ENCODE measurements at regions of chr17 and their contacts with region 1.

Region 1: GRCh38 chr17:69607162-69607834 is 192.8 kb downstream of the MAP2K6 start:
- DNase-seq: peak; percentile 86
- ATAC-seq: peak; percentile 42
- H3K4me3 ChIP-seq: no peak overlapping the region
- H3K27ac ChIP-seq: no peak overlapping the region
- H3K4me1 ChIP-seq: peaks cover 30% of the 10 kb centered on the region
- H3K27me3 ChIP-seq: no peaks in the 10 kb centered on the region
- CTCF ChIP-seq: peak; percentile 99

Region 2: DNA sequence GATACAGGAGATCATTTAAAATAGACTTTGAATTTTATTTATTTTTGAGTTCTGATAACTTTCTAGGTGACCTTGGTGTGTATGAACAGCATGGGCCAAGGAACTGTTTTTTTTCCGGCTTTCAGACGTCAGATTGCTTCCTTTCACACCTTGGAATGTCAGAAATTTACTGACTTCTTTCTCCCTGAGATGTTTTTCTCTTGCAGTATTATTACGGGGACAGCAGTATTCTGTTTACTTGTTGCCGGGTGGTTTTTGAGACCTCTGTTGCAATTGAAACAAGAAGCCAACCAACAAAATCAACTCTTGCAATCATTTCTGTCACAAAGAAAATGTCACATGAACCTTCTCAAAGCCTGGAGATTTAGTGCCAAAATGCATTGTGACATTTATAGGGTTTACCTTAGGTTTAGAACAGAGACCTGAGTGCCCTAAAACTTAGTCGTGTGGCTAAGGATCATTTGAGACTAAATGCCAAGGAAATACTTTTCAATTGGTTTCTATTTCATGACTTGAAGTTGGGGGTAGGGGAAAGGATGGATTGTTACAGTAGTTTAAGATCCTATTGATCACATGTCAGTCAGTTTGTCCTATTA is 18.5 kb before region 1 on chr17:
- CTCF ChIA-PET with region 1: no interaction called
- POLR2A ChIA-PET with region 1: no interaction called
- intact Hi-C with region 1: no loop called
- DNase-seq: no peak
- ATAC-seq: no peak
- H3K4me3 ChIP-seq: no peak overlapping the region
- H3K27ac ChIP-seq: no peak overlapping the region
- H3K4me1 ChIP-seq: no peaks in the 10 kb centered on the region
- H3K27me3 ChIP-seq: no peaks in the 10 kb centered on the region
- CTCF ChIP-seq: no peak

Region 3: DNA sequence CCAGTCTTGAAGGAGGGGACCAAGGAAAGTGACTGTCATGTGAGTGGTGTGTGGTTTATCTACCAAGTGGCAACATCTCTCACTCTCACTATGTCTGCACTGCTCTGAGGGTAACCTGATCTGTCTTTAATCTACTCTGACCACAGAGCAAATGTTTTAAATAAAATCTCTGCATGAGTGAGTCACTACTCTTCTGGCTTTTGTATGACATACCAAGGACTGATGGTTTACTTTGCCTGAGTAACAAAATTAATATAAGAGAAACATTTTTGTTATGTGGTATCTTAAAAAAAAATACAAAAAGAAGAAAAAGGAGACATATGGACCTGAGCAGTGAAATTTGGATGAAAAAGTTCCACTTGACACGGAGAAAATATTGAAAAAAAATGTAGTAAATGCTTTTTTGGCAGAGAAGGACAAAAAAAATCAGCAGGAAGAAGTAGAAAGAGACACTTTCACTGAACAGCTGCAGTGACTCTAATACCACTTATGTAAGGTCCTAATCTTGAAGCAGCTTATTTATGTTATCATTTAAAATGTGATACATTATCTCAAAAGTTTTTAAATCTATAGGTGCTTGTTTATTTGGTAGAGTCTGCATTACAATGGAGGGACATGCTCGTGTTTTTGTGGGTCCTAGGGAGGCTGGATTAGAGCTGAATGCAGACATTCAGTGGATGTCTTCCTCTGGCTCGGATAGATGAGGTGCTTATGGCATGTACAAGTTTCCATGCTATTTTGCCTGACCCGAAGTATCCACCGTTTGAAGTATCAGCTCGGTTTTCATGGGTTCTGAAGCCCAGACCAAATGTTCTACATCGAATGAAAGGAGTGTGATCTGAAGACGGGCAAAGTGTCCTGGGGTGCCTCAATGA is 47.9 kb after region 1 on chr17:
- CTCF ChIA-PET with region 1: no interaction called
- POLR2A ChIA-PET with region 1: no interaction called
- intact Hi-C with region 1: loop called (anchors 1 kb)
- DNase-seq: peak; percentile 94
- ATAC-seq: peak; percentile 100
- H3K4me3 ChIP-seq: no peak overlapping the region
- H3K27ac ChIP-seq: peak overlapping the region; percentile 11; the same call in 1 of the 2 replicates
- H3K4me1 ChIP-seq: peaks cover 18% of the 10 kb centered on the region
- H3K27me3 ChIP-seq: no peaks in the 10 kb centered on the region
- CTCF ChIP-seq: no peak

Region 4: GRCh38 chr17:69779378-69780214 is 172.3 kb after region 1 on chr17:
- CTCF ChIA-PET with region 1: interaction called, 4 read pairs
- POLR2A ChIA-PET with region 1: no interaction called
- intact Hi-C with region 1: loop called (anchors 1 kb)
- DNase-seq: peak; percentile 91
- ATAC-seq: peak; percentile 79
- H3K4me3 ChIP-seq: no peak overlapping the region
- H3K27ac ChIP-seq: peak overlapping the region; percentile 82
- H3K4me1 ChIP-seq: peaks cover 37% of the 10 kb centered on the region
- H3K27me3 ChIP-seq: no peaks in the 10 kb centered on the region
- CTCF ChIP-seq: no peak

Region 5: GRCh38 chr17:69870091-69870530 is 262.8 kb after region 1 on chr17:
- CTCF ChIA-PET with region 1: interaction called, 3 read pairs
- POLR2A ChIA-PET with region 1: no interaction called
- intact Hi-C with region 1: loop called (anchors 5 kb)
- DNase-seq: peak; percentile 95
- ATAC-seq: peak; percentile 69
- H3K4me3 ChIP-seq: no peak overlapping the region
- H3K27ac ChIP-seq: peak overlapping the region; percentile 66
- H3K4me1 ChIP-seq: peaks cover 40% of the 10 kb centered on the region
- H3K27me3 ChIP-seq: no peaks in the 10 kb centered on the region
- CTCF ChIP-seq: no peak

Region 6: GRCh38 chr17:70144260-70144846 is 537.1 kb after region 1 on chr17:
- CTCF ChIA-PET with region 1: interaction called, 9 read pairs
- POLR2A ChIA-PET with region 1: no interaction called
- intact Hi-C with region 1: loop called (anchors 1 kb)
- DNase-seq: peak; percentile 56
- ATAC-seq: no peak; the same call in 1 of the 2 replicates
- H3K4me3 ChIP-seq: no peak overlapping the region
- H3K27ac ChIP-seq: no peak overlapping the region
- H3K4me1 ChIP-seq: peaks cover 7% of the 10 kb centered on the region
- H3K27me3 ChIP-seq: no peaks in the 10 kb centered on the region
- CTCF ChIP-seq: peak; percentile 91

Region 7: DNA sequence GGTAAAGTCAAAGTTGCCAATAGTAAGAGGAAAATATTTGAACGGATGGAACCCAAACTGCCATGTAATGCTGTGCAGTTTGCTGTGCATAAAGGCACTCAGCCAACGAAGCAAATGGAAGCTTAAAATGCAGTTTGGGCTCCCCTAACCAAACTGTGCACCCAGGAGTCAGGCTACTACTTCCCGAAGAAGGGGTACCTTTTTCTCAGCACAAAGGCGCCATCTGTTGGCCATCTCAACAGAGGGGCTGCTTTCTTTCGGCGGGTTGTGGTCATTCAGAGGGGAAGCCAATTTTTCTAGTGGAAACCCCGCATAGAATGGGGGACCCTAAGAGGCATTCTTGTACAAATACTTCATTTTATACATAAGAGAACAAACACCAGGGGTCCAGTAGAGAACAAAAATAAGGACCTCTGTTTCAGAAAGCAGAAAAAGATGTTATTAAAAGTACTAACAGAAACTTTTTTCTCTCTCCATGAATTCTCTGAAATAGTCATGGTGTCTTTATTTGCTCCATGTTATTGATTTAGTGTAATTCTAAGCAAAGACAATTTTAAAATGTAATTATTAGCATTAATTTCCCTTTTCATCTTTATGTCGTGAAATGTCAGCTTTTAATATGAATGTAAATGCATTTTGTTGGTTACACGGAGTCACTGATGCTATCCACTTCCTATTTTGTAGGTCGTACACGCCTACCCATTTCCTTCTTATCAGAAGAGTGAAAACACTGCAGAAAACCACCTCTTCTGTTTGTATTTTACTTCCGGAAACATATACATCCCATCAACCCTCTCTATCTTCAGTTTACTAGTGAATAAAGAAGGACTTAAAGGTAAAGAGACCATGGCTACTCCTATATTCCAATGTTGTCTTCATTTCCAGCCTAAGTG is 1015.3 kb after region 1 on chr17:
- CTCF ChIA-PET with region 1: no interaction called
- POLR2A ChIA-PET with region 1: no interaction called
- intact Hi-C with region 1: loop called (anchors 1 kb)
- DNase-seq: peak; percentile 80
- ATAC-seq: peak; percentile 90
- H3K4me3 ChIP-seq: peak overlapping the region; percentile 4; the same call in 1 of the 2 replicates
- H3K27ac ChIP-seq: no peak overlapping the region
- H3K4me1 ChIP-seq: peaks cover 3% of the 10 kb centered on the region; the same call in 1 of the 2 replicates
- H3K27me3 ChIP-seq: no peaks in the 10 kb centered on the region
- CTCF ChIP-seq: peak; percentile 97